Naive thymus-derived CD8-positive, alpha-beta T cell (primary cell): ENCODE measurements at regions of chr1 and their contacts with region 1.

Region 1: DNA sequence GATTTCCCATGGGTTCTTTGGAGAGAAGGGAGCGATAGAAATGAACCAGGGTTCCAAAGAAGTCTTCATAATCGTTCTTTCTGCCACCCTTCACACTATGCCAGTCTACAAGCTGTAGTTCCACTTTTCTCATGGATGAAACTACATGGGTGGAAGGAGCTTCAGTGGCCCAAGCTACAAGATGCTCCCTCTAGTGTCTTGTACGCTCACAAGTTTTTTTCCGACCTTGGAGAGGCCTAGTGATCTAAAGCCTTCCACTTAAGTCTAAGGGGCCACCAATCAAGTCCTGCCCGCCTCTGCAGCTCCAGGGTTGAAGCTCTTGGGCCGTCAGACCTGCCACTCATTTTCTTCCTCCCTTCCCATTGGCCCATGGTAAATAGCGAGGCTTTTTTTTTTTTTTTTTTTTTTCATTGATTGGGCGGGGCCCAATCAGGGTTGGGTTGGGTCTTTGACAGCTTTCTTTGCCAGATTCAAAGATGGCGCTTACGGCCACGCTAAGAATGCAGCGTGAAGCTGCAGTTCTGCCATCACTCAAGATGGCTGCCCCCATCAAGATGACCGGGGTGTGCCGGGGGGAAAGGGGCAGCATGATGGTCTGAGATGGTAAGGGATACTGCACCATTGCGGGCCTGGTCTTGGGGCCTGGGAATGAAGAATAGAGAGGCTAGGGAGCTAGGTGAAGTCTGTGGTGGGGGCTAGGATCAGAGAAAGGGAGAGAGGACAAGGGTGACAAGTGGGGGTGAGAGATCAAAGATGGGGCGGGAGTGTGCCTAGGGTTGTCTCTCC is at the start of gene TOMM40L:
- DNase-seq: peak; percentile 68 to 97 (median 88)
- ATAC-seq: peak; percentile 97 to 98
- H3K4me3 Mint-ChIP-seq: peak within 1 kb of the TSS; percentile 94 to 100 (median 100)
- H3K27ac Mint-ChIP-seq: peak within 1 kb of the TSS; percentile 87 to 99 (median 96)
- H3K4me1 Mint-ChIP-seq: peaks cover 33 to 62% (median 54%) of the 10 kb centered on the region in 4 donors
- H3K27me3 Mint-ChIP-seq: no peaks in the 10 kb centered on the region
- polyA plus RNA-seq, gene TOMM40L: 4.9 to 8.1 (median 8.0) TPM

Region 2: DNA sequence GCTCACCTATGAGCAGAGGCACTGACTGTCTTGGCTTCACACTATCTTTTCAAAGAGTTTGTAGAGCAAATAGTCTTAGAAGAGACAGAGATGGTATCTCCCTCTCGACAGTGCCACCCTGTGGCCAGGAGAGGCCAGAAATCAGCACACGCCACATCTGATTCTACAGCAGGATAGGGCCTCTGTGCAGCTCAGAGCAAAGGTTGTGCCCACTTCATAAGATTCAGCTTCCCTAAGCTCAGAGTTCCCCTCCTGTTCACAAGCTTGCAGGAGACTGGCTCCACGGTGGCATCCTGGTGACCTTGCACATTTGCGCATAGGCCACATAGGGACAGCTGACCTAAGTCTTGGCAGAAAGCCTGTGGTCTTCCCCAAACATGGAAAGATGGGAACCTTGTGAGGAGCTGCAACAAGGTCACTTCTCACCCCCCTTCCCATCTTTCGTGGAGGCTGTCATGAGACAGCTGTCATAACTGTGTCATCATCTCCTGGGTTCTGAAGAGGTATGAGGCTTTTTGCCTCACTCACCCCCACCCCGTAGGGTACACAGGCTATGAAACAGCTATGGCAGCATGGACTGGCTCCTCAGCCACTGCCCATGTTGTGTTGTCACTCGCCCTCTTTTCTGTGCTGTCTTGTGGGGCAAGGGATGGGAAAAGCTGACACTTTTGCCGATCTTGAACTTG is 274.1 kb before region 1 on chr1:
- POLR2A ChIA-PET with region 1: no interaction called
- DNase-seq: peak; percentile 51 to 80 (median 66)
- ATAC-seq: peak; percentile 97
- H3K4me3 Mint-ChIP-seq: no peak overlapping the region
- H3K27ac Mint-ChIP-seq: no peak overlapping the region
- H3K4me1 Mint-ChIP-seq: peaks cover 9 to 22% (median 13%) of the 10 kb centered on the region in 4 donors
- H3K27me3 Mint-ChIP-seq: no peaks in the 10 kb centered on the region

Region 3: DNA sequence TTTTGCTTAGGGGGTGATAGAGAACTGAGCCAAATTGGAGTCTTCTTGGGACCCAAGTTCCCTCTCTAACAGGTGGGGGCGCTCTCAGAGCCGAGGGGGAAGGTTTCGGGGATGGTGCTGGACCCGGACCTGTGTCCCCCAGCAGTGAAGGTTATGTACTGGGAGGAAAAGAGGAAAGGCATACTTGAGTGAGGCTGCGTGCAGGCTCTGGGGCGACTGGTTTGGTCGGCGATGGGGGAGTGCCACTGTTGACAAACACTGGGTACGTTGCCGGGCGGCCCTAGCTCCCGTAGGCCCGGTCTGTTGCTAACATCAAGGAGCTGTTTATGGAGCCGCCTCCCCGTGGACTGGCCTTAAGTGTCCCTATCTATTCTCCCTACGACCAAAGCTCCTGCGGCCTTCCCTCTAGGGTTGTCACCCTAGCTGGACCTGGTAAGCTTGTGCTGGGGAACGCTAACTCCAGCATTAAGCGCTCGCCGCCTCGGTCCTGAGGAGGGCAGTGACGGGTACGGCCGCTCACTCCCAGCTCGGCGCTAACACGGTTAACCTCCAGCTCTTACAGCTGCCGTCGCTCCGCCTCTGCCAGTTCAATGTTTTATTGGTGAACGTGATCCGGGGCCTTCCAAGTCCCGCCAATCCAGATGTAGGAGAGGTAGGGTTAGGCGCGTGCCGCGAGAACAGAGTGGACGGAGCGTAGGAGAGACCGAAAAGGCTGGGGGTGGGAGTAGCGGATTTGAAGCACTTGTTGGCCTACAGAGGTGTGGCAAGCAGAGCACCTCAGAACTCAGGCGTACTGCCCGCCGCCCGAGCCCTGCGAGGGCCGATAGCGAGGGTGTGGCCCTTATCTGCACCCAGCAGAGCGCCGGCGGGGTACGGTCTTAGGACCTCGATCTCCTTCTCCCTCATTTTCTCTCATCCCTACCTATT is 59.7 kb before region 1 on chr1 and contains the start of gene PPOX:
- POLR2A ChIA-PET with region 1: interaction called, 37 read pairs
- DNase-seq: peak; percentile 76 to 97 (median 92)
- ATAC-seq: peak; percentile 90 to 92
- H3K4me3 Mint-ChIP-seq: peak within 1 kb of the TSS; percentile 86 to 97 (median 92)
- H3K27ac Mint-ChIP-seq: peak within 1 kb of the TSS; percentile 97 to 100 (median 98)
- H3K4me1 Mint-ChIP-seq: peaks cover 29 to 66% (median 63%) of the 10 kb centered on the region in 4 donors
- H3K27me3 Mint-ChIP-seq: no peaks in the 10 kb centered on the region
- polyA plus RNA-seq, gene PPOX: 12.0 to 17.8 (median 15.7) TPM

Region 4: DNA sequence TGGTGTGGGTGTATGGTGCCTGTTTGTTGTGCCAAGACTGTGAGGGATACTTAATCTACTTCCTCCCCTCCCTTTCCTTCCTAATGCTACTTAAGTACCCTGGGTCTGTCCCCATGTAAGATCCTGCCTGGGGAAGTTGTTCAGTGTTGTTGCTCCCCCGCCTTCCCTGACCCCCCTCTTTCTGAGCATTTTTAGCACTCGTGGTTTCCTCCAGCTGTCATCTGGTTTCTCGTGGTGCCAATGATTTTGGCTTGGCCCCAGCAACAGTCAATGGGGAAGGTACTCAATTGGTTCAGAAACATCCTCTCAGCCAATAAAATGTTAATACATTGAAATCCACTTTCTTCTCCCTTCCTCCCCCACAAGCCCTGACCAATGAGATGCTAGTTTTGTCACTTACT is 40.4 kb before region 1 on chr1:
- POLR2A ChIA-PET with region 1: interaction called, 16 read pairs
- DNase-seq: peak; percentile 50 to 92 (median 83)
- ATAC-seq: peak; percentile 72 to 89
- H3K4me3 Mint-ChIP-seq: peak overlapping the region; percentile 74 to 91 (median 88)
- H3K27ac Mint-ChIP-seq: peak overlapping the region; percentile 89 to 100 (median 94)
- H3K4me1 Mint-ChIP-seq: peaks cover 44 to 88% (median 82%) of the 10 kb centered on the region in 4 donors
- H3K27me3 Mint-ChIP-seq: no peaks in the 10 kb centered on the region

Region 5: GRCh38 chr1:161192476-161193465 is 33.0 kb before region 1 on chr1:
- POLR2A ChIA-PET with region 1: interaction called, 13 read pairs
- DNase-seq: peak; percentile 38 to 86 (median 66)
- ATAC-seq: peak; percentile 97
- H3K4me3 Mint-ChIP-seq: peak overlapping the region in 6 of 10 donors; percentile 44 to 68 (median 54)
- H3K27ac Mint-ChIP-seq: peak overlapping the region; percentile 67 to 97 (median 91)
- H3K4me1 Mint-ChIP-seq: peaks cover 10 to 64% (median 47%) of the 10 kb centered on the region in 4 donors
- H3K27me3 Mint-ChIP-seq: no peaks in the 10 kb centered on the region

Region 6: DNA sequence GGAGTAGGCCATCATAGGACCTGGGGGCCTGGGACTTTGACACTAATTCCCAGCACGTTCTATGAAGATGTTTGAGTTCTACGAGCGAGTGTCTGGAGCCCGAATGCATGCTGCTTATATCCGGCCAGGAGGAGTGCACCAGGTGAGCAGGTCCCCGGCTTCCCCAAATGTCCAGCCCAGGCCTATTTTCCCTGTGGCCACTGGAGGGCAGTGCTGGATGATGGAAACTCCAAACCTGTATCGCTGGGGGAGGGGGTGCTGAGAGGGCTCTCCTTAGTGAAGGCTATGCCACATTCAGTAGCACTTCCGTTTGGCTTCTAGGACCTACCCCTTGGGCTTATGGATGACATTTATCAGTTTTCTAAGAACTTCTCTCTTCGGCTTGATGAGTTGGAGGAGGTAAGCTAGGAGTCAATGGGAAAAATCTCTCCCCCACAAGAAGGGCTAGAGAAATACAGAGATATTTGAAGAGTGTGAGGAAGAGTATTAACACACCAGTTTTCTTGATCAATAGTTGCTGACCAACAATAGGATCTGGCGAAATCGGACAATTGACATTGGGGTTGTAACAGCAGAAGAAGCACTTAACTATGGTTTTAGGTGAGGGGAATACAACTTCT is 15.8 kb before region 1 on chr1:
- POLR2A ChIA-PET with region 1: interaction called, 231 read pairs
- DNase-seq: peak; percentile 62 to 90 (median 75)
- ATAC-seq: peak; percentile 96 to 97
- H3K4me3 Mint-ChIP-seq: no peak overlapping the region
- H3K27ac Mint-ChIP-seq: peak overlapping the region; percentile 46 to 91 (median 83)
- H3K4me1 Mint-ChIP-seq: peaks cover 22 to 54% (median 45%) of the 10 kb centered on the region in 4 donors
- H3K27me3 Mint-ChIP-seq: no peaks in the 10 kb centered on the region

Region 7: GRCh38 chr1:161244888-161245287 is 19.2 kb after region 1 on chr1:
- POLR2A ChIA-PET with region 1: no interaction called
- DNase-seq: no peak
- ATAC-seq: no peak
- H3K4me3 Mint-ChIP-seq: no peak overlapping the region
- H3K27ac Mint-ChIP-seq: no peak overlapping the region
- H3K4me1 Mint-ChIP-seq: no peaks in the 10 kb centered on the region
- H3K27me3 Mint-ChIP-seq: peaks cover 3 to 15% (median 8%) of the 10 kb centered on the region in 5 donors

Region 8: GRCh38 chr1:161305867-161306519 is 80.3 kb after region 1 on chr1:
- POLR2A ChIA-PET with region 1: interaction called, 23 read pairs
- DNase-seq: peak; percentile 77 to 96 (median 91)
- ATAC-seq: peak; percentile 95 to 97
- H3K4me3 Mint-ChIP-seq: peak overlapping the region; percentile 92 to 100 (median 98)
- H3K27ac Mint-ChIP-seq: peak overlapping the region; percentile 90 to 99 (median 96)
- H3K4me1 Mint-ChIP-seq: peaks cover 14 to 44% (median 37%) of the 10 kb centered on the region in 4 donors
- H3K27me3 Mint-ChIP-seq: no peaks in the 10 kb centered on the region

Region 9: DNA sequence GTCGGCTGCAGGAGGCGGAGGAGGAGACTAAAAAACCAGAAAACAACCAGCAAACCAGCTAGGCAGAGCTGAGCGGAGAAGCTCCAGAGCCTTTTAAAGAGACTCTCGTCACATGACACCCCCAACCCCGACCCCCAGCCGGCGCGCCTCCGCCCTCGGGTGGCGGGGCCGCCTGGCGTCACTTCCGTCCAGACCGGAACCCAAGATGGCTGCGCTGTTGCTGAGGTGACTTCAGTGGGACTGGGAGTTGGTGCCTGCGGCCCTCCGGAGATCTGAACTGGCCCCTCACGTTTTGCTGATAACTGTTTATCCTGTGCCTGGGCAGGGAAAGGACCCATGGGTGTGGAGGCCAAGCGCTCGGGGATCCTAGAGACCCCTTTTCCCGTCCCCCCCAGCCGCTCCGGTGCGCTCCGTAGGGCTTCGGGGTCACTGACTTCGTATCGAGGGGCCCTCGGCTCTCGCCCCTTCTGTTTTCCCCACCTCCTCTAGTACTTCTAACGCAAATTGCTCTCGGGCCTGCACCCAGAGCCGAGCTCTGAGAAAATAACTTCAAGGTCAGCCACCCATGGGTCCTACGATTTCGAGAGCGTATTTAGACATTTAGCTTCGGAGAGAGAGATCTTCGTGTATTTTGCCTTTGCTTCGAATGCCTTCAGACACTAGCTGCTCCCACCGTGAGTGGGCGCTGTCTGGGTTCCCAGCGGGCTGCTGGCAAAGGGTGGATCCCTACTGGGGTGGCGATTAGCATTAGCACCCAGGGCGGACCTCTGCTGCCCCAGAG is 88.7 kb after region 1 on chr1 and contains the start of gene SDHC:
- POLR2A ChIA-PET with region 1: interaction called, 28 read pairs
- DNase-seq: peak; percentile 88 to 95 (median 90)
- ATAC-seq: peak; percentile 98 to 99
- H3K4me3 Mint-ChIP-seq: peak within 1 kb of the TSS; percentile 96 to 99 (median 98)
- H3K27ac Mint-ChIP-seq: peak within 1 kb of the TSS; percentile 98 to 100 (median 99)
- H3K4me1 Mint-ChIP-seq: peaks cover 11 to 29% (median 26%) of the 10 kb centered on the region in 4 donors
- H3K27me3 Mint-ChIP-seq: no peaks in the 10 kb centered on the region
- polyA plus RNA-seq, gene SDHC: 212 to 297 (median 217) TPM

Region 10: GRCh38 chr1:161330346-161330745 is 104.6 kb after region 1 on chr1:
- POLR2A ChIA-PET with region 1: no interaction called
- DNase-seq: no peak
- ATAC-seq: no peak
- H3K4me3 Mint-ChIP-seq: no peak overlapping the region
- H3K27ac Mint-ChIP-seq: peak overlapping the region in 2 of 10 donors; percentile 24 to 63
- H3K4me1 Mint-ChIP-seq: peaks cover 0 to 3% (median 0%) of the 10 kb centered on the region in 4 donors
- H3K27me3 Mint-ChIP-seq: no peaks in the 10 kb centered on the region